ENCODE measurements at regions of chr2 and their contacts with region 1.

Region 1: GRCh38 chr2:171109571-171109970 is 51.1 kb downstream of the TLK1 start:
- DNase-seq: no peak
- H3K4me3 ChIP-seq: no peak overlapping the region
- H3K4me3 Mint-ChIP-seq: peak overlapping the region in 3 of 8 donors; percentile 4 to 25 (median 7)
- H3K27ac ChIP-seq: no peak overlapping the region
- H3K27ac Mint-ChIP-seq: peak overlapping the region; percentile 0 to 85 (median 37)
- H3K4me1 ChIP-seq: peaks cover 24% of the 10 kb centered on the region
- H3K4me1 Mint-ChIP-seq: peaks cover 50 to 57% (median 53%) of the 10 kb centered on the region in 4 donors
- H3K27me3 ChIP-seq: no peaks in the 10 kb centered on the region
- H3K27me3 Mint-ChIP-seq: no peaks in the 10 kb centered on the region

Region 2: DNA sequence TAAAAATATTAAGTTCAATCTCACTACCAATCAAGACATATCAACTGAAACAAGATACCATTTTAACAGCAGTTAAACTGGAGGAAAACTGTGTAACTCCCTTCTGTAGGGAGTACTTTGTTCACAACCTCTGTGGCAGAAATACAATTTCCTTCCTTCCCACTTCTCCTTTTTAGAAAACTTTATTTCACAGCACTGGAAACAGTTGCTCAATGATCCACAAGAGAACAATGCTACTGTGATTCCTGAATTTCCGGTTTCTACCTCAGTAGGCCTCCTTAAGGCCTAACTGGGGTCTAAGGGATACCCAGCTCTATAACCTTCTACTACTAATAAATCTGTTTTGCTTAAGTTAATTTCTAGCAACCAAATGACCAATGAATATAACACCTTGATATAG is 37.1 kb after region 1 on chr2:
- CTCF ChIA-PET with region 1: no interaction called
- POLR2A ChIA-PET with region 1: no interaction called
- intact Hi-C with region 1: loop called (anchors 5 kb)
- DNase-seq: no peak
- H3K4me3 ChIP-seq: no peak overlapping the region
- H3K4me3 Mint-ChIP-seq: peak overlapping the region in 3 of 8 donors; percentile 37 to 70 (median 61)
- H3K27ac ChIP-seq: no peak overlapping the region
- H3K27ac Mint-ChIP-seq: peak overlapping the region in 5 of 7 donors; percentile 5 to 78 (median 47)
- H3K4me1 ChIP-seq: peaks cover 89% of the 10 kb centered on the region
- H3K4me1 Mint-ChIP-seq: peaks cover 64 to 88% (median 76%) of the 10 kb centered on the region in 4 donors
- H3K27me3 ChIP-seq: no peaks in the 10 kb centered on the region
- H3K27me3 Mint-ChIP-seq: no peaks in the 10 kb centered on the region

Region 3: GRCh38 chr2:172339371-172340010 is 1229.9 kb after region 1 on chr2:
- CTCF ChIA-PET with region 1: no interaction called
- POLR2A ChIA-PET with region 1: no interaction called
- intact Hi-C with region 1: no loop called
- DNase-seq: peak in 3 of 5 donors; percentile 4 to 10 (median 6)
- H3K4me3 ChIP-seq: no peak overlapping the region
- H3K4me3 Mint-ChIP-seq: peak overlapping the region; percentile 32 to 87 (median 78)
- H3K27ac ChIP-seq: no peak overlapping the region
- H3K27ac Mint-ChIP-seq: peak overlapping the region in 5 of 7 donors; percentile 1 to 91 (median 71)
- H3K4me1 ChIP-seq: peaks cover 19% of the 10 kb centered on the region
- H3K4me1 Mint-ChIP-seq: peaks cover 18 to 24% (median 22%) of the 10 kb centered on the region in 4 donors
- H3K27me3 ChIP-seq: no peaks in the 10 kb centered on the region
- H3K27me3 Mint-ChIP-seq: peaks cover 0 to 2% of the 10 kb centered on the region in 2 donors

Region 4: DNA sequence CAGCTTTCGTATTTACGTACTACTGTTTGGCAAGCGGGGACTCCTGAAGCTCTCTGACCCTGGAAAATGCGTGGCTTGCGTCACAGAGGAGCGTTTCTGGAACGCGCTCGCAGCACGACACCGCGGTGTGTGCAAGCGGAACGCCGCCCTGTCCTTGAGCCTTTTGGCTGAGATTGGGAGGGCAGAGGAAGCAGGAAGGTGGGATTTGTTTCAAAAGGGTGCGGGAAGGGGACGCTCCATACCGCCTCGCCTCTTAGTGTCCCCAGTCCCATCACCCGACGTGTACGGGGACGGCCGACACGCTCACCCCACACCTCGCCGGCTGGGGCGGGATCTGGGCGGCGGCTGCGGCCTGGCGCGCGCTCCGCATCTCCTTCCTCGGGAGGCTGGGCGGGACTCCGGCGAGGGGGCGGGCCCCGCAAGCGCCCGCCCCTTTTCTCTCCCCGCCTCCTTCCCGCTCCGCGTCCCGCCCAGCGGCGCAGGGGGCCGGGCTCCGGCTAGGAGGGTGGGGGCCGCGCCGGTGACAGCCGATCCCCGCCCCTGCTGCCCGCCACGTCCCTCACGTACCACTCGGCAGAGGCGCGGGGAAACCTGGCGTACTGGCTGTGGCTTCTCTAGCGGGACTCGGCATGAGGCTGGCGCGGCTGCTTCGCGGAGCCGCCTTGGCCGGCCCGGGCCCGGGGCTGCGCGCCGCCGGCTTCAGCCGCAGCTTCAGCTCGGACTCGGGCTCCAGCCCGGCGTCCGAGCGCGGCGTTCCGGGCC is 1446.1 kb after region 1 on chr2 and contains the start of gene PDK1:
- CTCF ChIA-PET with region 1: no interaction called
- POLR2A ChIA-PET with region 1: no interaction called
- intact Hi-C with region 1: no loop called
- DNase-seq: peak; percentile 90 to 94 (median 93)
- H3K4me3 ChIP-seq: peak within 1 kb of the TSS; percentile 62 to 82
- H3K4me3 Mint-ChIP-seq: peak within 1 kb of the TSS; percentile 90 to 97 (median 94)
- H3K27ac ChIP-seq: peak within 1 kb of the TSS; percentile 82
- H3K27ac Mint-ChIP-seq: peak within 1 kb of the TSS; percentile 78 to 96 (median 93)
- H3K4me1 ChIP-seq: peaks cover 31% of the 10 kb centered on the region
- H3K4me1 Mint-ChIP-seq: peaks cover 22 to 51% (median 38%) of the 10 kb centered on the region in 4 donors
- H3K27me3 ChIP-seq: no peaks in the 10 kb centered on the region
- H3K27me3 Mint-ChIP-seq: peaks cover 0 to 1% of the 10 kb centered on the region in 2 donors
- total RNA-seq, gene PDK1: 34.2 to 36.8 TPM